Spleen (tissue), 13 donors: ENCODE measurements at regions of chr13 and their contacts with region 1.

Region 1: DNA sequence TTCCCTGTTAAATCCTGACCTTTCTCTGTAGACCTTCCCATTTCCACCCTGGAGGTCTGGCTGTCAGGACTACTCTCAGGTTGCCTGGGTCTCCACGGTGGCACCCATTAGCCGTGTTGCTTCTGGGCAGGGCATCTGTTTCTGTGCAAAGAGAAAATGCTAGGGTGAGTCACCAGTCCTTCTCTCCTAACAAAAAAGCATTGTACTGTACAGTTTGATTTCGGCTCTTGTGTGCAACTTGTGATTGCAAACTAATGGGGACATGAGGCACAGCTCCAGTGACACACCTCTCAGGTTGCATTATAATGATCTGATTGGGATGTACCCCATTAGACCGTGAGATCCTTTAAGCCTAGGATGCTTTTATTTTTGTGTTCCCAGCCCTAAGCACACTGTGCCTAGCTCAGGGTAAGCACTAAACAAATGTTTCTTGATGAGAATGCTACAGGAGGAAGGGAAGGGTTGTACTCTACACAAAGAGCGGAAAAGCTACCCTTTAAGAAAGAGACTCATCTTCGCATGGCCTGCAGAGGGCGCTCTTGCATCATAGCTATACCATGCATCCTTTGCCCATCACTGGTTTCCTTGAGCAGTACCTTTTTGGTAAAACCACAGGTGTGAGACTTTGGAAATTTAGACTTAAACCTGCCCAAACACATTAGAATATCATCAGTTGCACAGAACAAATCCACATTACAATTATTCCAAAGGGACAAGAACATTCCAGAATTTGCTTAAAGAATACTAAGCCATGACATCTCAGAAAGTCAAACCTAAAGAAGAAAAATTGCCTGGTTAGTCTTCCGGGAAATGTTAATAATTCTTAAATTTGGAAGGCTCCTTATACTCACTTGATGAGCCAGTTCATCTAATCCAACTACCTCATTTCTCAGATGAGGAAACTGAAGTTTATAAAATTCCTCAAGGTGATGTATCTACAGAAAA is 20.3 kb upstream of the TRIM13 start:
- DNase-seq: peak; percentile 91
- H3K4me3 ChIP-seq: no peak overlapping the region
- H3K27ac ChIP-seq: no peak overlapping the region
- H3K4me1 ChIP-seq: peaks cover 0 to 8% (median 0%) of the 10 kb centered on the region in 6 donors
- H3K27me3 ChIP-seq: no peaks in the 10 kb centered on the region
- CTCF ChIP-seq: peak; percentile 56 to 87 (median 82)
- POLR2A ChIP-seq: no peak

Region 2: GRCh38 chr13:49821216-49822030 is 155.2 kb before region 1 on chr13:
- intact Hi-C with region 1: no loop called
- DNase-seq: no peak
- H3K4me3 ChIP-seq: no peak overlapping the region
- H3K27ac ChIP-seq: no peak overlapping the region
- H3K4me1 ChIP-seq: no peaks in the 10 kb centered on the region
- H3K27me3 ChIP-seq: peaks cover 0 to 7% (median 0%) of the 10 kb centered on the region in 7 donors
- CTCF ChIP-seq: no peak
- POLR2A ChIP-seq: no peak

Region 3: DNA sequence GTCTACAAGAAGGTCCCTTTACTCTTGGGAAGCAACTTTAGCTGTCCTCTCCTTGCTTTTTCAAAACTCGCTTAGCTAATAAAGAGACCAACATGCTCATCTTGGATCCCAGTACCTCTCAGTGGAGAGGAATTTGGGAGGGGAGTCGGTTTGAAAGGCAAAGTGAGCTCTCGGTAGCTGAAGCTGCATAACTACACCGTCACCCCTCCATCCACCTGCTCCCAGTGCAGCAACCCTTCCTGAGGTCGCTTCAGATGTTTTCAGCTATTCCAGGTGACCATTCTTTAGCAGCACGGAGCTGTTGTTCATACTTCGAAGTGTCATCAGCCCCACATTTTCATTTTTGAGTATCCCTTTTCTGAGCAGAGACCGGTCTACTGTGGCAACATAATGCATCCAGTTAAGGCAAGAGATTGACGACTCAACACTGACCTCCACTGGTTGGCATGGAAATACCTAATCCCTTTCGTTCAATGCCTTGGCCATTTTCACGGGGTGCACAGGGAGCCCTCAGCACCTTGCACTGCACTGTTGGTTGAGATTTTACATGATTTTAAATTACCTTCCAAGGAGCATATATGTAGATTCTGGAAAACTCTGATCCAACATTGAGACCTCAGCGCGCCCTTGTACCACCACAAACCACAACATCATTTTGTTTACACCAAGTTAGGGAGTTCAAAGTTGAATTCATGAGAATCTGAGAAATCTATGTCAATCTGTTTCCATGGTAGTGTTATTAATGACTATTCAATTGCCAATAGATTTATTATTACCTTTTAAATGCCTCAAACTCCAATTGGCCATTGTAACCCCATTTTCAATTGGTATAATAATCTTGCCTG is 824.7 kb after region 1 on chr13:
- intact Hi-C with region 1: loop called (anchors 5 kb)
- DNase-seq: no peak
- H3K4me3 ChIP-seq: peak overlapping the region in 1 of 8 donors; percentile 36
- H3K27ac ChIP-seq: peak overlapping the region in 6 of 8 donors; percentile 21 to 73 (median 50)
- H3K4me1 ChIP-seq: peaks cover 7 to 36% (median 32%) of the 10 kb centered on the region in 6 donors
- H3K27me3 ChIP-seq: no peaks in the 10 kb centered on the region
- CTCF ChIP-seq: peak; percentile 53 to 86 (median 81)
- POLR2A ChIP-seq: no peak

Region 4: DNA sequence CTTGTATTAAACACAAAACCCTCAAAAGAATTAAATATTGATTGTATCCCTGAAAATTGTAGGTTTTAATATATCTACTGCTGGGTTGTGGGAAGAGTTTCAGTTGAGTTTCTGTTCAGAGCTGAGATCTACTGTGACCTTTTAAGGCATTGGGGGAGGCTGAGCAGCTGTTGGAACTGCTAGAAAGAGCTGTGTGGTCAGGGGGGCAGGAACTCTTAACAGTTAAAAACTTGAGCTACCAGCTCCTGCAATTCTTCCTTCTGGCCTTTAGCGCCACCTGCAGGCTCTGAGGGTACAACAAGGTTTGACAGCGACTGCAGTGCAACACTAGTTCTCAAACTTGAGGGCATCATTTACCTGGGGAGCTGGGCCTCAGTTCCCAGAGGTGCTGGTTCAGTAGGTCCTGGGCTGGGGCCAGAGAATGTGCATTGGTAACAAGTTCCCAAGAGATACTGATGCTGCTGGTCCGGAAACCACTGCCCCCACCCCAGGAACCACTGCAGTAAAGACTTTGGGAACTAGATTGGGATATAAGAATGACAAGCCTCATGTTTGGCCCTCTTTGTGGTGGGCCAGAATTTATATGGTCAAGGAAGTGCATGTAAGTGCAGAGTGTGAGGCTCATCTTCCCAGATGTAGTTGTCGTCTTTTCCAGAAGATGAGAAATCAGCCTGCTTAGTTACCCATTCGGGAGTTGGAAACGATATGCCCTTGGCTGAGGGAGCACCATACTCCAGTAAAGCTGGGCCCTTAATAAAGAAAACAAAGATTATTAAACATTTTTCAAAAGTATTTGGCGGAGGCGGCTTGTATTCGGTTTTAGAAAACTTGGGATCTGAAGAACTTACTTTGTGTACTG is 935.6 kb after region 1 on chr13:
- intact Hi-C with region 1: loop called (anchors 5 kb)
- DNase-seq: peak; percentile 96
- H3K4me3 ChIP-seq: peak overlapping the region in 5 of 8 donors; percentile 73 to 90 (median 85)
- H3K27ac ChIP-seq: peak overlapping the region in 7 of 8 donors; percentile 96 to 98 (median 97)
- H3K4me1 ChIP-seq: peaks cover 48 to 90% (median 73%) of the 10 kb centered on the region in 6 donors
- H3K27me3 ChIP-seq: no peaks in the 10 kb centered on the region
- CTCF ChIP-seq: peak; percentile 76 to 93 (median 88)
- POLR2A ChIP-seq: peak in 1 of 3 donors; percentile 11

Region 5: DNA sequence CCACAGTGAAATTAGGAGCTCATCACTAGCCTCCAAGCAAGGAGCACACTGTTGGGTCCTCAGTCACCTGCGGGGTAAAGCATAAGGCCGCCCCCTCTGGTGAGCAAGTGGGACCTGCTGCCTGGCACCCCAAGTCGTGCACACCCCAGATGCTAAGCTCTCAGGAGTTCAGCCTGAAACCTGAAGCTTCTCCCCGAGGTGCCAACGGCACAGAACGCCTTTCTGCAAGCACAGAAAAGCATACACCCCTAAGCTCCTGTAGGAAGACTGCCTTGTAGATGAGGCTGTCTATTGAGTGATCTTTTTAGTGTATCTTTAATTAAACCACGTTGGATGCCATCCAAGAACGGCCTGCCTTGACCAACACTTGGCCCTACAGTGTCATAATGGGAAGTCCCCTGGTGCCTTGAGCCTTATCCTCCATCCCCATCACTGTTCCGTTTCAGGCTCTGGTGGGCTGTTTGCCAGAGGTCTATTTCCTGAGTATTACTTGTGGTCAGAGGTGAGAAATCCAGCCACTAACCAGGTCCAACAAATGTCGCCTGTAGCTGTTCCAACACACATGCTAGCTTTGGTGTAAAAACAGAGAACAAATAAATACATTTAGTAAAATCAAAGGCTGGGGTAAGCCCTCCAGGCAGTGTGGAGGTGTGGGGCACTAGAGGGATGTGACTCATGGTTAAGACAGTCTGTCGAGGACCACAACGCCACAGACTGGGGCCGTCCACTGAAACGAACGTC is 1089.7 kb after region 1 on chr13:
- intact Hi-C with region 1: loop called (anchors 10 kb)
- DNase-seq: no peak
- H3K4me3 ChIP-seq: peak overlapping the region in 1 of 8 donors; percentile 8
- H3K27ac ChIP-seq: peak overlapping the region; percentile 52 to 84 (median 70)
- H3K4me1 ChIP-seq: peaks cover 6 to 70% (median 35%) of the 10 kb centered on the region in 6 donors
- H3K27me3 ChIP-seq: peaks cover 0 to 21% (median 0%) of the 10 kb centered on the region in 7 donors
- CTCF ChIP-seq: no peak
- POLR2A ChIP-seq: no peak